ENCODE measurements at regions of chr16 and their contacts with region 1.

Region 1: DNA sequence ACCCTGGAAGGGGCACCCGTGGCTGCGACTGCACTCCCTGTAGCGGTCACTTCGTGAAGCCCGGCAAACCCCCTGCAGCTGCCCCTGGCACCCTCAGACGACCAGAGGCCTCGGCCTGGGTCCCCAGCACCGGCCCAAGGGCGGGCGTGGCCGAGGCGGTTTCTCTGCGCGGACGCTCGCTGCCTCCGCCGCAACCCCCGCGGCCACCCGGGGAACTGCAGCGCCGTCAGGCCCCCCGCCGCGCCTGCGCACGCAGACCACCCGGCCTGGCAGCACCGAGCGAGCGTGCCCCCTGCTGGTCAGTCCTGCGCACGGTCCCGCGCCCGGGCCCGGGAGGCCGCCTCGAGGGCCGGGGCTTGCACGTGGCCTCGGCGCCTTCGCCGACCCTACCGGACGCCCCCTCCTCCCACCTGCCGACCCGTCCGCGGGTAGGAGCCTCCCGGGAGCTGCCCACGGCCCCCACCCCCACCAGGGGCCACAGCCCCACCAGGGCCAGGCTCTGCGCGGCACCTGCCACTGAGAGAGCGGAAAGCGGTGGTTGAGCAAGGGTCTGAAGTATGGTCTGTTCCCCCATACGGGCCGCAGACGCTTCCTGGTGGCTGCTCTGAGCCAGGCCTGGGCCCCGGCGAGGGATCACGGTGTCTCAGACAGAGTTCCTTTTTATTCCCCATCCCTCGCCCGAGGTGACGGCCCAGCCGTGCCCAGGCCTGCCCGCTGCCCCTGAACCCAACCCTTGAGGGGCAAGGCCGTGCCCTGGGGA is 11.5 kb upstream of the HS3ST6 start:
- DNase-seq: peak; percentile 99
- CTCF ChIP-seq: peak; percentile 96

Region 2: DNA sequence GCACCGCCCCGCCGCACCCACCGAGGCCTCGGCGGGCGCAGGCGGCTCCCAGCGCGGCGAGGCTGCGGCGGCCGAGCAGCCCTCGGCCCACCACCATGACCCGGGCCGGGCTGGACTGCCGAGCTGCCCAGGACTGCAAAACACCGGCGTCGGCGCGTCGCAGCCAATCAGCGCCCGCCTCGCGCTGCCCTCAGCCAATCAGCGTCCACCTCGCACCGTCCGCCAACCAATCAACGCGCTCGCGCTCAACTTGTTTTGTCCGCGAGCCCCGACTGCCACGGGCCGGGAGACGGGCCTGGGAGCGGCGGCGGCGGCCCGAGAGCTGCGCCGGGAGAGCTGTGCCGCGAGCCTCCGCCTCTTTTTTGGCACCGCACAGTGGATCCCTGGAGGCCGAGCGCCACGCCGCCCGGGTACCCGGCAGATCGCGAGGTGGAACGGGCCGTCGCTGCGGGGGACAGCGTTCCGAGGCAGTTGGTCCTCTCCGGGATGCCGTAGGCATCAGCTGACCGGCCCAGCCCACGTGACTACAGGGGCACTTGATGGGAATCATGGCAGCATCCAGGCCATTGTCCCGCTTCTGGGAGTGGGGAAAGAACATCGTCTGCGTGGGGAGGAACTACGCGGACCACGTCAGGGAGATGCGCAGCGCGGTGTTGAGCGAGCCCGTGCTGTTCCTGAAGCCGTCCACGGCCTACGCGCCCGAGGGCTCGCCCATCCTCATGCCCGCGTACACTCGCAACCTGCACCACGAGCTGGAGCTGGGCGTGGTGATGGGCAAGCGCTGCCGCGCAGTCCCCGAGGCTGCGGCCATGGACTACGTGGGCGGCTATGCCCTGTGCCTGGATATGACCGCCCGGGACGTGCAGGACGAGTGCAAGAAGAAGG is 102.8 kb before region 1 on chr16 and contains the starts of genes FAHD1 and HAGH:
- CTCF ChIA-PET with region 1: no interaction called
- POLR2A ChIA-PET with region 1: no interaction called
- DNase-seq: peak; percentile 99
- CTCF ChIP-seq: no peak

Region 3: DNA sequence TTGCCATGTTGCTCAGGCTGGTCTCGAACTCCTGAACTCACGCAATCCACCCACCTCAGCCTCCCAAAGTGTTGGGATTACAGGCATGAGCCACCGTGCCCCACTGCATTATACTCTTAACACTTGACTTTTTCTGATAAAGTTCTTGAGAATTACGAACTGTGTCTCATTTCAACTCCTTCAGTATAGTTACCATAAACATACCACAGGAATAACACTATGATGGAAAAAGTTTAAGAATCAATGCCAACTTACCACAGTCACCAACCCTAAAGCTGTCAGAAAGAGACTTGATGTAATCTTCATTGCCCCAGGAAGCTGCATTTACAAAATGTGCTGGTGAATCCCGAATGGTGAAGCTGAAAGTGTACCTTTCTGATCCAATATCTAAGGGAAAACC is 68.0 kb before region 1 on chr16:
- CTCF ChIA-PET with region 1: interaction called, 11 read pairs
- POLR2A ChIA-PET with region 1: no interaction called
- DNase-seq: no peak
- CTCF ChIP-seq: no peak

Region 4: GRCh38 chr16:1942810-1943726 is 13.3 kb after region 1 on chr16 and contains the start of gene MSRB1:
- CTCF ChIA-PET with region 1: interaction called, 20 read pairs
- POLR2A ChIA-PET with region 1: interaction called, 3 read pairs
- DNase-seq: peak; percentile 100
- CTCF ChIP-seq: no peak